ENCODE measurements at regions of chr12 and their contacts with region 1.

Region 1: DNA sequence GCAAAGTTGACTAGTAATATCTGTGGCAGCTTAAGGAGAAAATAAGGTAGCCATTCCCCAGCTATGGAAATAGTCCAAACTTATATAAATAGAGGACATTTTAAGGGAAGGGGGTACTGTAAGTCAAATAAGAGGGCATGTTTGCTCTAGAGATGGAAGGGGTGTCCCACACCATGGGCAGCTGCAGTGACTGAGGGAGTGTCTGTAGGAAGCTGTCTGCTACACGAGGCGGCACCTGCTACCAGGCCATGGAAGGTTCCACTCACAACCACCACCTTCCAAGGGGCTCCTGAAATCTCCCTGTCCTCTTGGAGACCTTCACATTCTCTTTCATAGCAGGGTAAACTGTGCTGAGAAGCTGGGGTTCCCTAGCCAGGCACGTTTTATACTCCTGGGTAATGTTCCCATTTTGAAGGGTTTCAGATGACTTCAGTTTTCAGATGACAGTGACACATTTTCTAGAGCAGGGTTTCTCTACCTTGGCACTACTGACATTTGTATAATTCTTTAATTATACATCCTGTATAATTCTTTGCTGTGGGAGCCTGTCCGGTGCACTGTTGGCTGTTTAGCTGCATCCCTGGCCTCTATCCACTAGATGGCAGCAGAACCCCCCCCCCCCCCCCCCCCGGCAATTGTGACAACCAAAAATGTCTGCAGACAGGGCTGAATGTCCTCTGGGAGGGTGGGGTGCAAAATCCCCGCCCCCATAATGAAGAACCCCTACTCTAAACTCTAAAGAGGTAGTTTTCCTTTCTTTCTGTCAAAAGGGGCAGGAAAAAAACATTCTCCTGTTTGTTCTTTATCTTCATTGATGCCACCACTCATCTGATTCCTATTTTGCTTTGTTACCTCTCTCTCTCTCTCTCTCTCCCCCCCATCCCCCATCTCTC is 11.6 kb upstream of the SMCO2 start:
- DNase-seq: peak; percentile 31
- ATAC-seq: peak; percentile 67
- H3K4me3 Mint-ChIP-seq: no peak overlapping the region
- H3K27ac Mint-ChIP-seq: no peak overlapping the region
- H3K4me1 Mint-ChIP-seq: peaks cover 13% of the 10 kb centered on the region
- H3K27me3 Mint-ChIP-seq: peaks cover 20% of the 10 kb centered on the region
- CTCF ChIP-seq: peak; percentile 62

Region 2: DNA sequence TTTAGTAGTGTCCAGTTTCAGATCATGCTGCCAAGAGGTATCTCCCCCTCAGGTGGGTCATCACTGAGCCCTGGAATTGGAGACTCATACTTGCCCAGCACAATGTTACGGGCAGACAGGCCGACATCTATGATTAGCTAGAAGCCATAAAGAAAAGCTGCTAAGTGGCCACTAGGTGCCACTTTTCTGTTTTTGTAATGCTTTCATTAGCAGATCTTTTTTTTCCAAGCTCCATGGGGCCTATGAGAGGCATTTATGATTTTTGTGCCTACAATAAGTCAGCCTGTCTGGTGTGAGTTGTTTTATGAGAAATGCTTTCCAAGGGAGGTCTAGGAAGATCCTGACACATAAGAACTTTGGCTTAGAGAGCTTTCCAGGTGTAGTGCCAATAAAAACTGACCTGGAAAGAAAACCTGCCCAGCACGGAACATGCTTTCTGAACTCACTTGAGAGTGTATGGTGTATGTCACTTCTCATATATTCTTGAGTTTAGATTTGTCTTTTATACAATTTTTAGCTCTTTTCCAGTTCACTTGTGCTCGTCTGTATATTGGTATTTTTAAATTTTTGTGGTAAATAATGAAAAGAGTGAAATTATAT is 10.2 kb before region 1 on chr12:
- CTCF ChIA-PET with region 1: interaction called, 13 read pairs
- POLR2A ChIA-PET with region 1: no interaction called
- intact Hi-C with region 1: no loop called
- DNase-seq: peak; percentile 7
- ATAC-seq: no peak
- H3K4me3 Mint-ChIP-seq: no peak overlapping the region
- H3K27ac Mint-ChIP-seq: no peak overlapping the region
- H3K4me1 Mint-ChIP-seq: no peaks in the 10 kb centered on the region
- H3K27me3 Mint-ChIP-seq: no peaks in the 10 kb centered on the region
- CTCF ChIP-seq: peak; percentile 33

Region 3: DNA sequence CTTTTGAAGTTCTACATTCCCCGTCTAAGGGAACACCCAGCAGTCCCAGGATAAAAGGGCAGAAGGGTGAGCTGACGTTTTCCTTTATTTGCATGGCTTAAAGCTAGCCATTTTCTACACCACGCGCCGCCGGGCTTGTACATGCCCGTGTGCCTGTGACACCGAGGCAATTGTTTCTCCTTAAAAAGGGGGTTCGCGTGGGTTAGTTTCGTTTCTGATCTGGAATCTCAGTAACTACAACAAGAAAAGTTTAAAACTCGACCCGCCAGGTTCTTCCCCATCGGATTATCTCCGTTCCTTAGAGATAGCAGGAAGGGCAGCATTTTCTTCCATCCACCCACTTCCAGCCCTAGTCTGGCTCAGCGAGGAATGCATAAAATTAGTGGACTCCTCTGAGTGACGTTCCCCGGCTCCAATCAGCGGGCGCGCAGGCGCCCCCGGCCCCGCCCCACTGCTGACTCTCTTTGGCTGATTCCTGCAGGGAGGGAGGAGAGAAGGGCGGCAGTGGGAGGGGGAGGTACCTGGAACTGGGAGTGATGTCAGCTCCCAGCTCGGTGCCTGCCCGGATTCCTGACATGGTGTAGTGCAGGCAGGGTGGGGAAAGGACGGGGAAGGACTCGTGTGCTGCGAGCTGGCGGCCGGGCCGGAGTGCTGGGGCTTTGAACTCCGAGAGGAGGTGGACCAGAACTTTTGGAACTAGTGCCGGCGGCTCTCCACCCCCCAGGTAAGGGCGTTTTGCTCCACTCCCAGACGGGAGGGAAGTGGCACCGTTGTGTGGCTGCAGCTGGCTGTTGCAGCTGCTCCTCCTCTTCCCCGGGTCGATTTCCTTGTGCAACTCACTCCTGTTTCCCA is 88.9 kb after region 1 on chr12 and contains the start of gene PPFIBP1:
- CTCF ChIA-PET with region 1: interaction called, 16 read pairs
- POLR2A ChIA-PET with region 1: no interaction called
- intact Hi-C with region 1: no loop called
- DNase-seq: peak; percentile 96
- ATAC-seq: peak; percentile 99
- H3K4me3 Mint-ChIP-seq: peak within 1 kb of the TSS; percentile 92
- H3K27ac Mint-ChIP-seq: peak within 1 kb of the TSS; percentile 89
- H3K4me1 Mint-ChIP-seq: peaks cover 17% of the 10 kb centered on the region
- H3K27me3 Mint-ChIP-seq: peaks cover 19% of the 10 kb centered on the region
- CTCF ChIP-seq: no peak
- total RNA-seq, gene PPFIBP1: 6.6 to 8.8 TPM

Region 4: DNA sequence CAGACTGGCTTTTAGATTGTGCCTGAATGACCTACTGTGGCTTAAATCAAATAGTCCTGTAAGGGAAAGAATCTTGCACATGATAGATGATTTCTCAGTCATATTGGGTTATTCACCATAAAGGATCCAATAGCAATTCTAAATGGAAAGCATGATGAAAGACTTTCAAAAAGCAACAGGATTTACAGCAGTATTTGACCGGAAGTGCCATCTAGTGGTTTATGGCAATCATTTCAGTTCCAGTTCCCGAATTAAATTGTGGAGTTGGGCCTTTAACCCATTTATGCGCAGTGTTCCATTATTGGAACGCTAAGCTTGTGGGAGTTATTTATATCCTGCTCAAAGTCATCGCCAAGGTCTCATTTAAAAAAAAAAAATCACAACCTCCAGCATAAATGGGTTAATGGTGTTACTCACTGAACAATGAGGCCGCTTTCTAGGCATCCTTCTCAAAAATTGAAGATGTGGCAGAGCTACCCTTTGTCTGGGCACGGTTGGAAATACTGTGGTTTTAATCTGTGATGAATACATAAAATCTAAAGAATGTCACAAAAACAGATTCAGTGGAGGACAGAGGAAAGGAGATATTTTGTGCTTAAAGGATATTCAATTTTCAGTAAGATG is 200.5 kb after region 1 on chr12:
- CTCF ChIA-PET with region 1: interaction called, 11 read pairs
- POLR2A ChIA-PET with region 1: no interaction called
- intact Hi-C with region 1: loop called (anchors 5 kb)
- DNase-seq: peak; percentile 5
- ATAC-seq: peak; percentile 51
- H3K4me3 Mint-ChIP-seq: no peak overlapping the region
- H3K27ac Mint-ChIP-seq: no peak overlapping the region
- H3K4me1 Mint-ChIP-seq: peaks cover 16% of the 10 kb centered on the region
- H3K27me3 Mint-ChIP-seq: peaks cover 1% of the 10 kb centered on the region
- CTCF ChIP-seq: peak; percentile 56

Region 5: DNA sequence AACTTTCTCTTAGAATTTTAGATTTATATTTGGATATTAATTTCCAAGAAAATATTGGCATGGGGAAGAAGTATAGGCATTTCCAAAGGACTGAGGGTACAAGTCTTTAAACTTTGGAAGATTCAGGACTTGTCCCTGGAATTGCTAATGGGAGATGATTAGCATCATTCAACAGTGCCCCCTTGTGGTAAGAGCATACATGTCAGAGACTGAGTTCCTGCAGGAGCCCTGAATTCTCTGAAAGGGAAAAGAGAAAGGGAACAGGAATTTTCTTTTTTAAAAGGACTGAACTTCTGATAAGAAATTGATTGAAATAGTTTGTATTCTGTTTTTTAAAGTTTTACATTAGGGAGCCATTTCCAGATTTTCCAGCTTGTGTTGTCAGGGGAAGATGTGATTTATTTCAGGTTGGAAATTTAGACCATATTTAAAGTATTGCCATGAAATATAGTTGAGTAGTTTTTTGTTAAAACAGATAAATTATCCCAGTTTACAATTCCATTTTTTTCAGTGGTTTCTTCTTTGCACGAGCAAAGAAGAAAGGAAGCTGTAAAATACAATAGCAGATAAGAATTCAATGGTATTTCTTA is 217.3 kb after region 1 on chr12:
- CTCF ChIA-PET with region 1: interaction called, 19 read pairs
- POLR2A ChIA-PET with region 1: no interaction called
- intact Hi-C with region 1: loop called (anchors 2 kb)
- DNase-seq: peak; percentile 34
- ATAC-seq: no peak
- H3K4me3 Mint-ChIP-seq: no peak overlapping the region
- H3K27ac Mint-ChIP-seq: no peak overlapping the region
- H3K4me1 Mint-ChIP-seq: peaks cover 2% of the 10 kb centered on the region
- H3K27me3 Mint-ChIP-seq: peaks cover 1% of the 10 kb centered on the region
- CTCF ChIP-seq: peak; percentile 96

Measured in activated CD8-positive, alpha-beta T cell treated with anti-CD3 and anti-CD28 coated beads for 36 hours (primary cell).